ENCODE measurements at regions of chr4 and their contacts with region 1.

Region 1: GRCh38 chr4:36399762-36400353 is 118.4 kb downstream of the DTHD1 start:
- DNase-seq: peak; percentile 24
- ATAC-seq: peak; percentile 82
- H3K4me3 ChIP-seq: no peak overlapping the region
- H3K27ac ChIP-seq: no peak overlapping the region
- H3K4me1 ChIP-seq: no peaks in the 10 kb centered on the region; the same call in 1 of the 2 replicates
- H3K27me3 ChIP-seq: no peaks in the 10 kb centered on the region
- CTCF ChIP-seq: peak; percentile 68 to 85 (median 73)
- EP300 ChIP-seq: no peak
- POLR2A ChIP-seq: no peak
- RAD21 ChIP-seq: peak; percentile 99

Region 2: DNA sequence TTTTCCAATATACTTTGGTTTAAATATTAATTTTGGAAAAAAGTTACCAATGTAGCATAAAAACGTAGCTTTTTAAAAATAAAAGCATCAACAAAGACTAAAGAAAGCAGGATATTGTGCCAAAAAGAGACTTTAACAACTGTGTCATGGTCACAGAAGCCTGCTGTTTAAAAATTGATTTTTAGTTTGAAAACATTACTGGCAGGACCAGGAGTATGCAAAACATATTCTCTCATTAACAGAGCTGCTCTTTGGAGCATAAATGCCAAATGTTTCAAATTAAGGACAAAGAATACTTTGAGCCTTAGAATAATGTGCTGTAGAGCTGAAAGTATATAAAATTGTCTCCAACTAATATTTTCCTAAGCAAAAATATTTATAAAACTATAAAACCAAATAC is 434.6 kb before region 1 on chr4:
- CTCF ChIA-PET with region 1: no interaction called
- POLR2A ChIA-PET with region 1: no interaction called
- RAD21 ChIA-PET with region 1: no interaction called
- SMC1A ChIA-PET with region 1: no interaction called
- in situ Hi-C with region 1: no loop called
- intact Hi-C with region 1: loop called (anchors 10 kb)
- DNase-seq: no peak
- ATAC-seq: peak; percentile 44
- H3K4me3 ChIP-seq: no peak overlapping the region
- H3K27ac ChIP-seq: no peak overlapping the region
- H3K4me1 ChIP-seq: no peaks in the 10 kb centered on the region
- H3K27me3 ChIP-seq: no peaks in the 10 kb centered on the region
- CTCF ChIP-seq: no peak
- EP300 ChIP-seq: no peak
- POLR2A ChIP-seq: no peak
- RAD21 ChIP-seq: no peak

Region 3: GRCh38 chr4:36006226-36006625 is 393.6 kb before region 1 on chr4:
- CTCF ChIA-PET with region 1: no interaction called
- POLR2A ChIA-PET with region 1: no interaction called
- RAD21 ChIA-PET with region 1: no interaction called
- SMC1A ChIA-PET with region 1: no interaction called
- in situ Hi-C with region 1: no loop called
- intact Hi-C with region 1: no loop called
- DNase-seq: no peak
- ATAC-seq: no peak
- H3K4me3 ChIP-seq: no peak overlapping the region
- H3K27ac ChIP-seq: no peak overlapping the region
- H3K4me1 ChIP-seq: no peaks in the 10 kb centered on the region
- H3K27me3 ChIP-seq: no peaks in the 10 kb centered on the region
- CTCF ChIP-seq: no peak
- EP300 ChIP-seq: no peak
- POLR2A ChIP-seq: no peak
- RAD21 ChIP-seq: no peak

Region 4: GRCh38 chr4:36244257-36245079 is 155.4 kb before region 1 on chr4 and contains the start of gene ARAP2:
- CTCF ChIA-PET with region 1: interaction called, 73 read pairs
- POLR2A ChIA-PET with region 1: no interaction called
- RAD21 ChIA-PET with region 1: interaction called, 35 read pairs
- SMC1A ChIA-PET with region 1: interaction called, 71 read pairs
- in situ Hi-C with region 1: no loop called
- intact Hi-C with region 1: no loop called
- DNase-seq: no peak
- ATAC-seq: peak; percentile 72
- H3K4me3 ChIP-seq: peak within 1 kb of the TSS; percentile 84
- H3K27ac ChIP-seq: peak within 1 kb of the TSS; percentile 88
- H3K4me1 ChIP-seq: no peaks in the 10 kb centered on the region
- H3K27me3 ChIP-seq: no peaks in the 10 kb centered on the region
- CTCF ChIP-seq: peak in 1 of 3 experiments; percentile 12; a peak in 1 of 6 replicates
- EP300 ChIP-seq: no peak
- POLR2A ChIP-seq: peak; percentile 66; the same call in 1 of the 2 replicates
- RAD21 ChIP-seq: 0 out of 2 replicates have a peak, but pooled peaks have one; percentile 10
- polyA plus RNA-seq, gene ARAP2: 5.4 to 5.7 TPM

Region 5: GRCh38 chr4:36320117-36320896 is 79.6 kb before region 1 on chr4:
- CTCF ChIA-PET with region 1: interaction called, 12 read pairs
- POLR2A ChIA-PET with region 1: no interaction called
- RAD21 ChIA-PET with region 1: interaction called, 6 read pairs
- SMC1A ChIA-PET with region 1: interaction called, 7 read pairs
- in situ Hi-C with region 1: no loop called
- intact Hi-C with region 1: no loop called
- DNase-seq: peak; percentile 54
- ATAC-seq: peak; percentile 78
- H3K4me3 ChIP-seq: no peak overlapping the region; the same call in 1 of the 2 replicates
- H3K27ac ChIP-seq: peak overlapping the region; percentile 79
- H3K4me1 ChIP-seq: peaks cover 52% of the 10 kb centered on the region
- H3K27me3 ChIP-seq: no peaks in the 10 kb centered on the region
- CTCF ChIP-seq: no peak
- EP300 ChIP-seq: peak in 1 of 2 experiments; percentile 39; a peak in 1 of 4 replicates
- POLR2A ChIP-seq: no peak
- RAD21 ChIP-seq: peak; percentile 29; the same call in 1 of the 2 replicates

Region 6: DNA sequence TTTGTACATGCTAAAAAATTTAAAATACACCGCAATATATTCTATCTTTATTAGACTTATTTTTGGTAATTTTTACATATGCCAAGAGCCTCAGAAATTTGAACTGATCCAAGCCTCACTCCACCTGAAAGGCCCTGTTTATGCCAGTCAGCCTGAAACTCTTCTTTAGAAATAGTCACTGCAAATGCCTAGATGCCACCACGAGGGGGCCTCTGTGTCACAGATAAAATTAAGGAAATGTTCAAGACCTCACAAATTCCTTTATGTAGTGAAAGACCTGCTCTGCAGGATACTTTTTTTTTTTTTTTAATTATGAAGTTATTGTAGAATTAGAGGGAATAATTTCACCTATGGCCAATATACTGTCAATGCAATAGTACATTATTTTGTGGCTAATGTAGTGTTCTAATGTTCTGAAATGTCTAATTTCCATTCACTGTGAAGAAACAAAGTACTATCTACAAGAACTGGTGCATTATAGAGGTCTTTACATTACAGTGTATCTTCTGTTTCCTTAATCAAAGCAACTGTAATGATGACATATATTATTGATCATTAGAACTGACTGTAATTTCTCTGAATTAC is 48.7 kb before region 1 on chr4:
- CTCF ChIA-PET with region 1: interaction called, 131 read pairs
- POLR2A ChIA-PET with region 1: interaction called, 7 read pairs
- RAD21 ChIA-PET with region 1: interaction called, 83 read pairs
- SMC1A ChIA-PET with region 1: interaction called, 95 read pairs
- in situ Hi-C with region 1: loop called (anchors 5 kb)
- intact Hi-C with region 1: loop called (anchors 1 kb)
- DNase-seq: peak; percentile 37
- ATAC-seq: peak; percentile 72
- H3K4me3 ChIP-seq: no peak overlapping the region
- H3K27ac ChIP-seq: no peak overlapping the region
- H3K4me1 ChIP-seq: peaks cover 13% of the 10 kb centered on the region
- H3K27me3 ChIP-seq: no peaks in the 10 kb centered on the region
- CTCF ChIP-seq: peak; percentile 70 to 87 (median 78)
- EP300 ChIP-seq: no peak
- POLR2A ChIP-seq: no peak
- RAD21 ChIP-seq: peak; percentile 96

Region 7: DNA sequence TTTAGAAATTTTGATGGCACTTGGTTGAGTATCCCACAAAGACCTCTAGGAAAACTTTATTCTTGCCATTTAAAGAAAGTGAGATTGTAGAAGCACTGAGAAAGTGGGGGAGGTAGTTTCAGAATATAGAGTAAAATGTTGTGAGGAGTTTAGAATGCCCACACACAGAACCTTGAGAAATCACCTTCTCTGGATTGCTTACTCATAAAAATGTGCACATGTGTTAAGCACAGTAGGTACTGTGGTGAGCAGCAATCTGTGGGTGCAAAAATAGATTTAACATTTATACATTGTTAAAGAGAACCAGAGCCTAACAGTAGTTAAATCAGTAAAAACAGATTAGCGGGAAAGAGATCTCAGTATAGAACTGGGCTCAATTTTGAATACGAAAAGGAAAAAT is 643.5 kb after region 1 on chr4:
- CTCF ChIA-PET with region 1: no interaction called
- POLR2A ChIA-PET with region 1: no interaction called
- RAD21 ChIA-PET with region 1: no interaction called
- SMC1A ChIA-PET with region 1: no interaction called
- in situ Hi-C with region 1: no loop called
- intact Hi-C with region 1: no loop called
- DNase-seq: no peak
- ATAC-seq: peak; percentile 47
- H3K4me3 ChIP-seq: no peak overlapping the region
- H3K27ac ChIP-seq: no peak overlapping the region
- H3K4me1 ChIP-seq: no peaks in the 10 kb centered on the region
- H3K27me3 ChIP-seq: no peaks in the 10 kb centered on the region
- CTCF ChIP-seq: no peak
- EP300 ChIP-seq: no peak
- POLR2A ChIP-seq: no peak
- RAD21 ChIP-seq: no peak

Region 8: DNA sequence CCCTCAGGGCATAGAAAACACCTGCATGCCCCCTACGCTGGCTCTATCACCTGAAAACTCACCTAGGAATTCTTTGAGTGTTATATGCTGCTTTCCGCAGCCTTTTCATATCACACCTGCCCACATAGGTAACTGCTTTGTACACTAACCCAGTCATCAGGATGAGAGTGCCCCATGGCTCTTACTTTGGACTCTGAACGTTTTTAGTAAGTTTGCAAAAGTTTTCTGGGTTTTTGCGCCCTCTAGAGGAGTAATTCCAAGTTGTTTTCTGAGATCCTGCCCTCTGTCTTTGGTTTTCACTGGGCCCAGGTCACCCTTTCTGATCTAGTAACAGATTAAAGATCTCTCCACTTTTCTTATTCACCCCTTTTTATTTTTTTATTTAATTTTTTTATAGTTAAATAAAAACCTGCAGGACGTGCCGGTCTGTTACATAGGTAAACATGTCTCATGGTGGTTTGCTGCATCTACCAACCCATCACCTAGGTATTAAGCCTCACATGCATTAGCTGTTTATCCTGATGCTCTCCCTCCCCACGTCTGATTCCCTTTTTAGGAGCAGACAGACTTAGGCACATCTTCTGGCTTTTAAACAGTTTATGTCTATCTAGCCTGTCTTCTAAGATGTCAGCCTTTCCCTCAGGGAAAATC is 983.8 kb after region 1 on chr4:
- CTCF ChIA-PET with region 1: interaction called, 21 read pairs
- POLR2A ChIA-PET with region 1: no interaction called
- RAD21 ChIA-PET with region 1: interaction called, 5 read pairs
- SMC1A ChIA-PET with region 1: interaction called, 7 read pairs
- in situ Hi-C with region 1: no loop called
- intact Hi-C with region 1: no loop called
- DNase-seq: no peak
- ATAC-seq: peak; percentile 90
- H3K4me3 ChIP-seq: no peak overlapping the region
- H3K27ac ChIP-seq: no peak overlapping the region
- H3K4me1 ChIP-seq: no peaks in the 10 kb centered on the region
- H3K27me3 ChIP-seq: peaks cover 0 to 4% of the 10 kb centered on the region in 2 experiments; a peak in 1 of 4 replicates
- CTCF ChIP-seq: peak; percentile 55 to 69 (median 60)
- EP300 ChIP-seq: no peak
- POLR2A ChIP-seq: no peak
- RAD21 ChIP-seq: peak; percentile 71